HCT116 (cell line): ENCODE measurements at regions of chr17 and their contacts with region 1.

Region 1: GRCh38 chr17:77349976-77350830 is 209.4 kb downstream of the SEC14L1 start:
- DNase-seq: no peak
- ATAC-seq: no peak
- H3K4me3 ChIP-seq: no peak overlapping the region
- H3K27ac ChIP-seq: no peak overlapping the region
- H3K4me1 ChIP-seq: peaks cover 0 to 26% of the 10 kb centered on the region in 2 experiments; a peak in 2 of 4 replicates
- H3K27me3 ChIP-seq: no peaks in the 10 kb centered on the region
- CTCF ChIP-seq: no peak
- POLR2A ChIP-seq: no peak
- RAD21 ChIP-seq: no peak

Region 2: GRCh38 chr17:77471984-77472461 is 121.8 kb after region 1 on chr17:
- CTCF ChIA-PET with region 1: no interaction called
- POLR2A ChIA-PET with region 1: no interaction called
- RAD21 ChIA-PET with region 1: no interaction called
- intact Hi-C with region 1: loop called (anchors 5 kb)
- DNase-seq: no peak
- ATAC-seq: peak; percentile 10; the same call in 1 of the 2 replicates
- H3K4me3 ChIP-seq: peak overlapping the region in 1 of 2 experiments; percentile 32; a peak in 2 of 4 replicates
- H3K27ac ChIP-seq: peak overlapping the region; percentile 79
- H3K4me1 ChIP-seq: peaks cover 51 to 78% of the 10 kb centered on the region in 2 experiments
- H3K27me3 ChIP-seq: no peaks in the 10 kb centered on the region
- CTCF ChIP-seq: no peak
- POLR2A ChIP-seq: no peak
- RAD21 ChIP-seq: no peak